OCI-LY7 (cell line): ENCODE measurements at regions of chr4 and their contacts with region 1.

Region 1: GRCh38 chr4:130432289-130432688 is 1336.3 kb downstream of the C4orf33 start:
- DNase-seq: no peak
- H3K4me3 ChIP-seq: no peak overlapping the region
- H3K27ac ChIP-seq: no peak overlapping the region
- H3K4me1 ChIP-seq: no peaks in the 10 kb centered on the region
- CTCF ChIP-seq: no peak

Region 2: GRCh38 chr4:130422261-130422660 is 10.0 kb before region 1 on chr4:
- CTCF ChIA-PET with region 1: no interaction called
- POLR2A ChIA-PET with region 1: interaction called, 4 read pairs
- intact Hi-C with region 1: loop called (anchors 2 kb)
- DNase-seq: peak; percentile 42
- H3K4me3 ChIP-seq: no peak overlapping the region
- H3K27ac ChIP-seq: peak overlapping the region; percentile 26
- H3K4me1 ChIP-seq: peaks cover 13% of the 10 kb centered on the region
- CTCF ChIP-seq: no peak